GM12878 (cell line): ENCODE measurements at regions of chr16 and their contacts with region 1.

Region 1: DNA sequence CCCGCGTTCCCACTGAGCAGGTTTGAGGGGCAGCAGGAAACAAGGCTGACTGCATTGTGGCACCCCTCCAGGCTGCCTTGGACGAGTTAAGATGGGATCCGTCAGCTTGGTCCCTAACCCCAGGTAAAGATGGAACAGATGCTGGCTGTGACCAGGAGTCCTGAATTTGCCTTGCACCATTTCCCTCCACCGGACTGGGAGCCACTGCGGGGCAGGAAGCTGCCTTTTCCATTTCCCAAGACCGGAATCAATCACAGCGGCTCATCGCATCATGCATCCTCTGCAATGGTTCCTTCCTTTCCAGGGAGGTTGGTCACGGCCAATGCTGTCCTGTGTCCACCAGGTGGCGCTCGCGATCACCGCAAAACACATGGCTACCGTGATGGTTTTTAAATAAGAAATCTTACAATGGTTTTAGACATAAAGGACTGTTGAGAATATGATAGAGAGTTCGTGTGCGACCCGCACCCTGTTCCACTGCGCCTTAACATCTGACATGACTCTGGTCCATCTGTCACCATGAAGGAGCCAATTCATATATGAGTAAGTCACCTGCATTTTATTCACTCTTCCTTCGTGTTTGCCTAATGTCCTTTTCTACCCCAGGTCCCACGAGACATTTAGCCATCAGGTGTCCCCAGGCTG is 6.8 kb upstream of the MEAK7 start:
- DNase-seq: peak; percentile 62
- ATAC-seq: peak; percentile 37
- H3K4me3 ChIP-seq: no peak overlapping the region
- H3K27ac ChIP-seq: peak overlapping the region; percentile 63
- H3K4me1 ChIP-seq: peaks cover 64% of the 10 kb centered on the region
- H3K27me3 ChIP-seq: no peaks in the 10 kb centered on the region
- CTCF ChIP-seq: peak; percentile 93 to 96 (median 94)
- EP300 ChIP-seq: no peak
- POLR2A ChIP-seq: no peak
- RAD21 ChIP-seq: peak; percentile 96

Region 2: GRCh38 chr16:84562174-84562815 is 51.0 kb after region 1 on chr16:
- CTCF ChIA-PET with region 1: interaction called, 23 read pairs
- POLR2A ChIA-PET with region 1: no interaction called
- RAD21 ChIA-PET with region 1: interaction called, 6 read pairs
- SMC1A ChIA-PET with region 1: interaction called, 35 read pairs
- in situ Hi-C with region 1: no loop called
- intact Hi-C with region 1: loop called (anchors 2 kb)
- DNase-seq: peak; percentile 64
- ATAC-seq: peak; percentile 92
- H3K4me3 ChIP-seq: no peak overlapping the region
- H3K27ac ChIP-seq: peak overlapping the region; percentile 66
- H3K4me1 ChIP-seq: peaks cover 21% of the 10 kb centered on the region
- H3K27me3 ChIP-seq: no peaks in the 10 kb centered on the region
- CTCF ChIP-seq: no peak
- EP300 ChIP-seq: peak in 1 of 2 experiments; percentile 6; a peak in 1 of 4 replicates
- POLR2A ChIP-seq: no peak; the same call in 1 of the 2 replicates
- RAD21 ChIP-seq: no peak

Region 3: DNA sequence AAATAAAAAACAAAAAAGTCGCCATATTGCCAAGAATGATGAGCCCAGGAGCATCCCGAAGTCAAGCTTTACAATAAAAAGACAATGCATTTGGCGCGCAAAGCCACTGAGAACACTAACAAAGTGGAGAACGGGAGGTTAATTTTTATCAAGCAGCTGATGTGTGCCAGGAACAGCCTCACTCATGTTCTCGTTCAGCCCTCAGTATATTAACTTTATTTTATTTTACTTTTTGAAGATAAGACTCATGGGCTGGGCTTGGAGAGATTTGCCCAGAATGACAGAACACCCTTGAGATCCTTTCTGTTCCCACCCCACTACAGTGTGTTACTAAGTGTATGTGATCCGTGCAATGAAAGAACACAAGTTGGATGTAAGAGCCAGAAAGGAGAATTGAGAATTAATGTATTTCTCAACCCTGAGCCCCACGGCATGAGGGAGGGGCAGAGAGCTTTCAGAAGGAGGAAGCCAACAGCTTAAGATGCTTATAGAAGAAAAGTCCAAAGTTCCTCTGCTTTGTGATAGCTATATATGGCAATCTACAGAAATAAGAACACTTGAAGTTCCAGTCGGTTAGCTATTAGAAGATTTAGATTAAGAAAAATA is 58.2 kb after region 1 on chr16:
- CTCF ChIA-PET with region 1: interaction called, 4 read pairs
- POLR2A ChIA-PET with region 1: interaction called, 3 read pairs
- RAD21 ChIA-PET with region 1: interaction called, 5 read pairs
- SMC1A ChIA-PET with region 1: interaction called, 11 read pairs
- in situ Hi-C with region 1: no loop called
- intact Hi-C with region 1: no loop called
- DNase-seq: peak; percentile 36
- ATAC-seq: peak; percentile 64
- H3K4me3 ChIP-seq: no peak overlapping the region
- H3K27ac ChIP-seq: no peak overlapping the region
- H3K4me1 ChIP-seq: peaks cover 7% of the 10 kb centered on the region; the same call in 1 of the 2 replicates
- H3K27me3 ChIP-seq: no peaks in the 10 kb centered on the region
- CTCF ChIP-seq: no peak
- EP300 ChIP-seq: no peak
- POLR2A ChIP-seq: no peak
- RAD21 ChIP-seq: no peak

Region 4: GRCh38 chr16:84593825-84594724 is 82.8 kb after region 1 on chr16:
- CTCF ChIA-PET with region 1: interaction called, 18 read pairs
- POLR2A ChIA-PET with region 1: interaction called, 60 read pairs
- RAD21 ChIA-PET with region 1: interaction called, 79 read pairs
- SMC1A ChIA-PET with region 1: interaction called, 183 read pairs
- in situ Hi-C with region 1: no loop called
- intact Hi-C with region 1: loop called (anchors 1 kb)
- DNase-seq: peak; percentile 99
- ATAC-seq: peak; percentile 87
- H3K4me3 ChIP-seq: peak overlapping the region; percentile 77
- H3K27ac ChIP-seq: peak overlapping the region; percentile 97
- H3K4me1 ChIP-seq: peaks cover 57% of the 10 kb centered on the region
- H3K27me3 ChIP-seq: no peaks in the 10 kb centered on the region
- CTCF ChIP-seq: no peak
- EP300 ChIP-seq: peak; percentile 96 to 99
- POLR2A ChIP-seq: peak; percentile 85
- RAD21 ChIP-seq: peak; percentile 20; the same call in 1 of the 2 replicates

Region 5: GRCh38 chr16:84599521-84600202 is 88.4 kb after region 1 on chr16:
- CTCF ChIA-PET with region 1: interaction called, 18 read pairs
- POLR2A ChIA-PET with region 1: interaction called, 60 read pairs
- RAD21 ChIA-PET with region 1: interaction called, 79 read pairs
- SMC1A ChIA-PET with region 1: interaction called, 183 read pairs
- in situ Hi-C with region 1: no loop called
- intact Hi-C with region 1: loop called (anchors 1 kb)
- DNase-seq: no peak
- ATAC-seq: peak; percentile 35
- H3K4me3 ChIP-seq: peak overlapping the region; percentile 69
- H3K27ac ChIP-seq: peak overlapping the region; percentile 100
- H3K4me1 ChIP-seq: peaks cover 79% of the 10 kb centered on the region
- H3K27me3 ChIP-seq: no peaks in the 10 kb centered on the region
- CTCF ChIP-seq: no peak
- EP300 ChIP-seq: peak in 1 of 2 experiments; percentile 18; a peak in 1 of 4 replicates
- POLR2A ChIP-seq: peak; percentile 64
- RAD21 ChIP-seq: no peak

Region 6: GRCh38 chr16:84699712-84700445 is 188.6 kb after region 1 on chr16 and contains the start of gene USP10:
- CTCF ChIA-PET with region 1: interaction called, 11 read pairs
- POLR2A ChIA-PET with region 1: interaction called, 4 read pairs
- RAD21 ChIA-PET with region 1: no interaction called
- SMC1A ChIA-PET with region 1: interaction called, 4 read pairs
- in situ Hi-C with region 1: no loop called
- intact Hi-C with region 1: no loop called
- DNase-seq: no peak
- ATAC-seq: peak; percentile 82
- H3K4me3 ChIP-seq: peak within 1 kb of the TSS; percentile 91
- H3K27ac ChIP-seq: peak within 1 kb of the TSS; percentile 86
- H3K4me1 ChIP-seq: peaks cover 3% of the 10 kb centered on the region; the same call in 1 of the 2 replicates
- H3K27me3 ChIP-seq: no peaks in the 10 kb centered on the region
- CTCF ChIP-seq: no peak
- EP300 ChIP-seq: no peak
- POLR2A ChIP-seq: peak; percentile 93
- RAD21 ChIP-seq: no peak
- polyA plus RNA-seq, gene USP10: 46.1 to 47.7 TPM

Region 7: DNA sequence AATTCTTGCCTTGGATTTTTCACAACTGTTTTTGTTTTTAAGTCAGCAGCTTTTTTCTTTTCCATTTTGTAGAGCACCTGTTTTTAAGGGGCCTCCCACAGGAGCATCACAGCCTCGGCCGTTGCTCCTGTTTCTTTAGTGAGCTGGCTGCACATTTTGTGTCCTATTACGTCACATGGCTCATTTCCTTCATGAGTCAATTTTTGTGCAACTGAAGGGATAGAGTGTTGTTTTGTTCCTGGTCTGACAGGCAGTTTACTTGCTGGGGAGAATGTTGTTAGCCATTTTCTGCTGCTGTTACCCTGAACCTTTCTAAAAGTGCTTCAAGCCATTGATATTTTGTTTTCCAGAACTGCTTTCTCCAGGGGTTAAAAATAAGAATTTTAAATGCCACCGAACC is 263.5 kb after region 1 on chr16:
- CTCF ChIA-PET with region 1: no interaction called
- POLR2A ChIA-PET with region 1: no interaction called
- RAD21 ChIA-PET with region 1: no interaction called
- SMC1A ChIA-PET with region 1: no interaction called
- in situ Hi-C with region 1: no loop called
- intact Hi-C with region 1: no loop called
- DNase-seq: no peak
- ATAC-seq: no peak
- H3K4me3 ChIP-seq: no peak overlapping the region
- H3K27ac ChIP-seq: no peak overlapping the region
- H3K4me1 ChIP-seq: no peaks in the 10 kb centered on the region
- H3K27me3 ChIP-seq: no peaks in the 10 kb centered on the region
- CTCF ChIP-seq: no peak
- EP300 ChIP-seq: no peak
- POLR2A ChIP-seq: no peak
- RAD21 ChIP-seq: no peak

Region 8: GRCh38 chr16:84970447-84971127 is 459.3 kb after region 1 on chr16:
- CTCF ChIA-PET with region 1: interaction called, 11 read pairs
- POLR2A ChIA-PET with region 1: no interaction called
- RAD21 ChIA-PET with region 1: interaction called, 3 read pairs
- SMC1A ChIA-PET with region 1: interaction called, 4 read pairs
- in situ Hi-C with region 1: loop called (anchors 25 kb)
- intact Hi-C with region 1: no loop called
- DNase-seq: peak; percentile 27
- ATAC-seq: peak; percentile 99
- H3K4me3 ChIP-seq: no peak overlapping the region
- H3K27ac ChIP-seq: no peak overlapping the region
- H3K4me1 ChIP-seq: no peaks in the 10 kb centered on the region
- H3K27me3 ChIP-seq: no peaks in the 10 kb centered on the region
- CTCF ChIP-seq: peak; percentile 89 to 92 (median 90)
- EP300 ChIP-seq: no peak
- POLR2A ChIP-seq: no peak
- RAD21 ChIP-seq: peak; percentile 82